Adrenal gland (tissue), 19 donors: ENCODE measurements at regions of chr18 and their contacts with region 1.

Region 1: GRCh38 chr18:6729247-6730091 is at the start of gene ARHGAP28:
- DNase-seq: peak; percentile 64 to 89 (median 82)
- H3K4me3 ChIP-seq: peak within 1 kb of the TSS; percentile 25 to 78 (median 42)
- H3K27ac ChIP-seq: peak within 1 kb of the TSS in 4 of 5 donors; percentile 61 to 90 (median 84)
- H3K4me1 ChIP-seq: peaks cover 0 to 25% of the 10 kb centered on the region in 2 donors
- H3K27me3 ChIP-seq: no peaks in the 10 kb centered on the region
- CTCF ChIP-seq: peak in 3 of 6 experiments; percentile 8 to 44 (median 20)
- POLR2A ChIP-seq: peak; percentile 55 to 56
- total RNA-seq, gene ARHGAP28: 2.9 to 34.3 (median 8.9) TPM

Region 2: DNA sequence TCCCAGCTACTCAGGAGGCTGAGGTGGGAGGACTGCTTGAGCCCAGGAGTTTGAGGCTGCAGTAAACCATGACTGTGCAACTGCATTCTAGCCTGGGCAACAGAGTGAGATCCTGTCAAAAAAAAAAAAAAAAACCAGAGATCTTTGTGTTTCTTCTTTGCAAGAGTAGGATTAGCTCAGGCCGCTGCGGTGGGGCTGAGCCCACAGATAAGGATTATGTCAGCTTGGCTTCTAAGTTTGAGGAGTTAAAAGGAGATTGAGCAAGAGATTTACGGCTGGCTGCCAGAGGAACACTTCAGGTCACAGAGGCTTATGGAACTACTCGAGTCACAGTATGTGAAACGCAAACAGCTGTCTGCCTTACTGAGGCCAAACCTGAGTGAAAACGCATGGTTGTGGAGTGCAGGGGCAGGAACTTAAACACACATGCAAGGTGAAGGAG is 168.0 kb before region 1 on chr18:
- intact Hi-C with region 1: loop called in 1 of 2 experiments (anchors 10 kb)
- DNase-seq: peak in 6 of 7 donors; percentile 40 to 89 (median 62)
- H3K4me3 ChIP-seq: no peak overlapping the region
- H3K27ac ChIP-seq: no peak overlapping the region
- H3K4me1 ChIP-seq: no peaks in the 10 kb centered on the region
- H3K27me3 ChIP-seq: no peaks in the 10 kb centered on the region
- CTCF ChIP-seq: no peak
- POLR2A ChIP-seq: no peak